Cardiac septum (tissue), 1 donor: ENCODE measurements at regions of chr10 and their contacts with region 1.

Region 1: DNA sequence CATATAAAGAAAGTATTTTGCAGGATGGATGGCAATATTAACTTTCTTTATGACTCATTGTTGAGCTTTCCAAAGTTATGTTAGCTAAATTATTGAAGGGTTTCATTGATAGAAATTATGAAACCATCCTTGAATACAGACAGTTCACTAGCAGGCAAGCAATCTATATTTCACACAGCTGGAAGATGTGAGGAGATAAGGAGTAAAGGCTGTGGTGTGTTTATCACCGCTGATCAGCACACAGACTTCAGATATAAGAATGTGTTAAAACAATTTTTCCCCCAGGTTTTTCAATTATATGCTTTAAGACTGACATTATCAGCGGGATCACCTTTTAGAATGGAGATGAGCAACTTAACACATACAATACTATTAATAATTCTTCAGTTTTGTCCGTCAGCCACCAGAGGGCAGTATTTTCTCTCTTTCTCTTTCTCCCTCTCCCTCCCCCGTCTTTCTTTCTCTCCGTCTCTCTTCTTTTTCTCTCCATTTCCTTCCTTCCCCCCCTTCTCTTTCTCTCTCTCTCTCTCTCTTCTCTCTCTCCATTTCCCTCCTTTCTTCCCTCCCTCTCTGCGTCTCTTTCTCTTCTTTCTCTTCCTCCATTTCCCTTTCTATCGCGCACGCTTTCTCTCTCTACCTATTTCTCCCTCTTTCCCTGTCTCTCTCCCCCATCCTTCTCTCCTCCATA is 62.9 kb upstream of the FAM171A1 start:
- DNase-seq: no peak

Region 2: GRCh38 chr10:15585303-15585715 is 151.3 kb after region 1 on chr10:
- intact Hi-C with region 1: loop called (anchors 10 kb)
- DNase-seq: no peak

Region 3: GRCh38 chr10:15725603-15726002 is 291.6 kb after region 1 on chr10:
- intact Hi-C with region 1: loop called (anchors 2 kb)
- DNase-seq: no peak

Region 4: DNA sequence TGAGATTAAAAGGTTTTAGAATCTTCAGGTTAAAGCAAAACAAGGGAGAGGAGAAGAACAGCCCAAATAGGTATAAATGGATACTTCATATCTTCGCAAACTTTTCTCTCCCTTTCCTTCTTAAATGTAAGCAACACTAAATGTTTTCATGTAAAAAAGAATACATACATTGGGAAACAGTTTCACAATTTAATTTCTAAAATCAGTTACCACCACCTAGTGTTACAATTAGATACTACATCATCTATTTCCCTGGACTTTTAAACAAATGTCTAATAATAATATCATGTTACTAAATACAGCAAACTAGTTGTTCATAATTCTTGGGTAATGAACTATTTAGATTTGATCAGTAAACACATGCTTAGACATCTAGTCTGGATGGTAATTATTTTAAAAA is 390.5 kb after region 1 on chr10:
- intact Hi-C with region 1: loop called (anchors 5 kb)
- DNase-seq: no peak